Mammary epithelial cell (primary cell): ENCODE measurements at regions of chr15 and their contacts with region 1.

Region 1: DNA sequence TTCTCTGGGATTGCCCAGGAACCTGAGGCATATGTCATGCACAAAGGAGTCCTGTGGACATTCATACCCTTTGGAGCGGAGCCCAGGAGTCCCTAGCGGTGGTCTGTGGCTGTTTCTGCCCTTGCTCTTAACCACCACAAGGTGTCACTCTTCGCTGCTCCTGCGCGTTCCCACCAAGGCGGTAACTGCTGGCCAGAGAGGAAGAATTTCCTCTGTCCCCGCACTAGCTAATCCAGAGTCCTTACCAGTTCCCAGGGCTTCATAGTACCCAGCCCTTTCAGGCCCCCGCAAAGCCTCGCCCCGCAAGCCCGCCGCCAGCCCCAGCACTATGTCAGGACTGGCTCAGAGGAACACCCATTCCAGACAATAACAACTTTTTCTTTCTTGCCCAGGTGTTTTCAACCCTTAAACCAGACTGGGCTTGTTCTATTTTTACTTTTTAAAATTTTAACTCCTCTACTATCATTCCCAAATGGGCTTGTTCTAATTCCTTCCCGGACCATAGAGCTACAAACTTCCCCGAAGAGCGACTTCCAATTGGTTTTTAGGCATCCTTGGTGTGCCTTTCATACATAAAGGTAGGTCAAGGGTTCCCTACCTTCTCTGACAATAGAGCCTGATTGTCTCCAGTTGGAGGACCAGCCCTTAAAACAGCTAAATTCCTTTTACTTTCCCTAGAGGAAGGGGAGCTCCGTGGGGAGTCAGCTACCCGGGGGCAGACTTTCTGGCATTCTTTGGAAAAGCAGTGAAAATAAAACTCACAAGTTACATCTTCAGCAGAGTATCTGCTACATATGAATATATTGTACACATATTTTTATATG is 31.8 kb upstream of the ZNF774 start:
- DNase-seq: peak; percentile 88
- H3K4me3 ChIP-seq: peak overlapping the region; percentile 14 to 24 (median 15)
- H3K27ac ChIP-seq: peak overlapping the region; percentile 49
- H3K4me1 ChIP-seq: peaks cover 18% of the 10 kb centered on the region
- H3K27me3 ChIP-seq: no peaks in the 10 kb centered on the region
- CTCF ChIP-seq: peak; percentile 99 to 100

Region 2: GRCh38 chr15:90191794-90192509 is 128.3 kb before region 1 on chr15:
- CTCF ChIA-PET with region 1: no interaction called
- dilution Hi-C with region 1: no loop called
- in situ Hi-C with region 1: no loop called
- intact Hi-C with region 1: no loop called
- DNase-seq: peak; percentile 60
- H3K4me3 ChIP-seq: peak overlapping the region in 1 of 3 experiments; percentile 10
- H3K27ac ChIP-seq: peak overlapping the region; percentile 55
- H3K4me1 ChIP-seq: peaks cover 38% of the 10 kb centered on the region
- H3K27me3 ChIP-seq: no peaks in the 10 kb centered on the region
- CTCF ChIP-seq: peak in 1 of 2 donors; percentile 8

Region 3: GRCh38 chr15:90352109-90352893 is 32.0 kb after region 1 on chr15 and contains the start of gene ZNF774:
- CTCF ChIA-PET with region 1: no interaction called
- dilution Hi-C with region 1: no loop called
- in situ Hi-C with region 1: no loop called
- intact Hi-C with region 1: loop called (anchors 2 kb)
- DNase-seq: peak; percentile 95
- H3K4me3 ChIP-seq: peak within 1 kb of the TSS; percentile 66 to 78 (median 66)
- H3K27ac ChIP-seq: peak within 1 kb of the TSS; percentile 74
- H3K4me1 ChIP-seq: peaks cover 23% of the 10 kb centered on the region
- H3K27me3 ChIP-seq: no peaks in the 10 kb centered on the region
- CTCF ChIP-seq: no peak
- total RNA-seq, gene ZNF774: 5.7 to 6.0 TPM

Region 4: DNA sequence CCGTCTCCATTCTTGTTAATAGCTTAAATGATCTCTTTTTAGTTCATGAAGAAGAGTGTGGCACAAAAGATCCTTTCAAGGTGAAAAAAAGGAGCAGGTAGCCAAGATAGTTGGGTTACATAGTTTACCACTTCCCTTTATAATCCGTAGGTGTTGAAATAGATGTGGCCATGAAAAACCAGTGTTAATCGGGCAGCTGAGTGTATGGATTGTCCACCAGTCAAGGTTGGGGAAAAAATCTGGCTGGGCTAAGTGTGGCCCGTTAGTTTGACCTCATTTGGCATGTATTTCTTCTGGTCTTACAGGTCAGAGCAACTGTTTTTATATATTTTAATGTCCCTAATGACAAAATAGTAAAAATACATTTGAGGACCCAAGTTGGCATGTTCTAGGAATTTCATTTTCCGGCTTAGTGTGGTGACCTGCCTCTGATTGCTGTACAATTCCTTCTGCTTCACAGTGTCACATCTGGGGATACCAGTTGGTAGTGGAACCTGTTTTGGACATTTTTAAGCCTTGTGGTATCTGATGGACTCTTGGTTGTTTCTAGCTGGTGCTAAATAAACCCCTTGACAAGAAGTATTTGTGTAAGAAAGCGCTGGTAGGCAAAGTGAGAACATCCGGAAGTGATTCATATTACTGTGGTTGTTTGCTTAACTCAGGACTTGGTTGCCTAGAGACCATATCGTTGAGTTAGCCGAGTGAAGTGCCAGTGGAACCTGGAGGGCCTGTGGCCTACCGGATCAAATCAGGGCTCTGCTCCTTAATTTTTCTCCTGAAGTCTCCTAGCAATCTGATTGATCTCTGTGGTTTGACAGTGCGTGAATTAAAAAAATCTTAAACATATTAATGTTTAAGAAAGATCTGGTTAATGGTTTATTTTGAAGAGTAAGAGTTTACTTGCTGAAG is 80.4 kb after region 1 on chr15:
- CTCF ChIA-PET with region 1: no interaction called
- dilution Hi-C with region 1: no loop called
- in situ Hi-C with region 1: no loop called
- intact Hi-C with region 1: loop called (anchors 1 kb)
- DNase-seq: peak; percentile 91
- H3K4me3 ChIP-seq: peak overlapping the region; percentile 8 to 31 (median 12)
- H3K27ac ChIP-seq: peak overlapping the region; percentile 95
- H3K4me1 ChIP-seq: peaks cover 44% of the 10 kb centered on the region
- H3K27me3 ChIP-seq: no peaks in the 10 kb centered on the region
- CTCF ChIP-seq: no peak

Region 5: DNA sequence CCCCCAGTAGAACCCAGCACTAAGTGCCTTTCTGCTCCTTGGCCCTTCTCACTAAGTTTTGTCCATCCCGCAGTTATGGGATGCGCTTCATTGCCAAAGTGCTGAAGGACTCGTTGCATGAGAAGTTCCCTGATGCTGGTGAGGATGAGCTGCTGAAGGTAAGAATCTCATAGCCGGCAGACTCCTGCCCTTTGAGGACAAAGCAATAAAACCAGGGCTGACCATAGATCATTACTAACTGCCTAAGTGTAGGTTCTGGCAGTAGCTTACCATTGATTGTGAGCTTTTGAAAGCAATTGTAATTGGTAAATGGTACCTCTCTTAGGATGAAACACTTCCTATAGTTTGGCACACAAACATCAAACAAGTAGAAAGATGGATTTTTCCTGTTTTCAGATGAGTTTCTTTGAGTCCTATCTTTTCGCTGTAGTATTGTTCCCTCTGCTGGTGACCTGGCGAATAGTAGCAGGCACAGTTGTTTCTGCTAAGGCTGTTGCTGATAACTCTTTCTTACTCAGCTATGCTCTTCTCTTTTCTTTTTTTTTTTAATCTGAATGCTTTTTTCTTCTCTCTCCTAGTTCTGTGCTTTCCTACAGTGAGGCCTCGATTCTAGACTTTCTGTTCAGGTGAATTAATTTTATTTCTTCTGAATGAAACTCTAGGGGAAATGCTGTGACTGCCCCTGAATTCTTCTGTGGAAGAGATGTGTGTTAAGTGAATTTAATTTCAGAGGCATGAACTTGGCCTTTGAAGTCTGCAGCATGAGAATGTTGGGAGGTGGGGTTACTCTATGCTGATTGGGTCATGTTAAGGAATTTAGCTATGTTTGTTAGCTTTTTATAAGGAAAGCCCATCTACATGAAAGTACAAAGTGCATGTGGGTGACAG is 162.1 kb after region 1 on chr15:
- CTCF ChIA-PET with region 1: no interaction called
- dilution Hi-C with region 1: no loop called
- in situ Hi-C with region 1: loop called in 1 of 2 experiments (anchors 10 kb)
- intact Hi-C with region 1: loop called (anchors 1 kb)
- DNase-seq: no peak
- H3K4me3 ChIP-seq: no peak overlapping the region
- H3K27ac ChIP-seq: no peak overlapping the region
- H3K4me1 ChIP-seq: peaks cover 29% of the 10 kb centered on the region
- H3K27me3 ChIP-seq: no peaks in the 10 kb centered on the region
- CTCF ChIP-seq: peak; percentile 65 to 71

Region 6: GRCh38 chr15:90497912-90498311 is 177.6 kb after region 1 on chr15:
- CTCF ChIA-PET with region 1: no interaction called
- dilution Hi-C with region 1: no loop called
- in situ Hi-C with region 1: no loop called
- intact Hi-C with region 1: no loop called
- DNase-seq: no peak
- H3K4me3 ChIP-seq: no peak overlapping the region
- H3K27ac ChIP-seq: no peak overlapping the region
- H3K4me1 ChIP-seq: no peaks in the 10 kb centered on the region
- H3K27me3 ChIP-seq: no peaks in the 10 kb centered on the region
- CTCF ChIP-seq: no peak

Region 7: GRCh38 chr15:90691982-90692773 is 371.9 kb after region 1 on chr15:
- CTCF ChIA-PET with region 1: no interaction called
- dilution Hi-C with region 1: no loop called
- in situ Hi-C with region 1: no loop called
- intact Hi-C with region 1: loop called (anchors 2 kb)
- DNase-seq: no peak
- H3K4me3 ChIP-seq: no peak overlapping the region
- H3K27ac ChIP-seq: no peak overlapping the region
- H3K4me1 ChIP-seq: no peaks in the 10 kb centered on the region
- H3K27me3 ChIP-seq: no peaks in the 10 kb centered on the region
- CTCF ChIP-seq: no peak